BJ (cell line): ENCODE measurements at regions of chr3 and their contacts with region 1.

Region 1: GRCh38 chr3:196202516-196202970 is 8.7 kb downstream of the ZDHHC19 start:
- DNase-seq: no peak
- H3K4me3 ChIP-seq: no peak overlapping the region
- H3K27me3 ChIP-seq: peaks cover 5% of the 10 kb centered on the region
- CTCF ChIP-seq: no peak

Region 2: DNA sequence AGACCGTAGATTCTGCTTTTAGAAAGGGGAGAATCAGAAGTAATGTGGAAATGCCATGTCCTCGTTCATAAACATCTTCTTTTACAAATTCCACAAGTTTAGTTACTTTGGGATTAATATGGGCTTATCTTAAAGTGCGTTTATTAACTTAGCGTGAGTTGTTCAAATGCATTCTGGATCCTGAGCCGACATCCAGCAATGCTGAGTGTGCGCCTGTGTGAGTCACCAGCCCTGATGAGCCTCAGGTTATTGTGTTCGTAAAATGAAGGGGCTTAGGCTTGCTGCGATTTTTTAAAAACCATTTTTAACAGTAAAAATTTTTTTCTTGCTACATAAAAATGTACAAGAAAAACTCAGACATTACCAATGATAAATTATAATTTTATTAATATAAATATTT is 178.6 kb before region 1 on chr3:
- CTCF ChIA-PET with region 1: interaction called, 28 read pairs
- POLR2A ChIA-PET with region 1: no interaction called
- DNase-seq: no peak
- H3K4me3 ChIP-seq: no peak overlapping the region
- H3K27me3 ChIP-seq: 0 out of 2 replicates have a peak, but pooled peaks cover 2% of the 10 kb centered on the region
- CTCF ChIP-seq: no peak

Region 3: GRCh38 chr3:196073188-196073838 is 129.2 kb before region 1 on chr3:
- CTCF ChIA-PET with region 1: interaction called, 56 read pairs
- POLR2A ChIA-PET with region 1: no interaction called
- DNase-seq: no peak
- H3K4me3 ChIP-seq: no peak overlapping the region
- H3K27me3 ChIP-seq: no peaks in the 10 kb centered on the region
- CTCF ChIP-seq: peak; percentile 82

Region 4: GRCh38 chr3:196186651-196187573 is 15.6 kb before region 1 on chr3:
- CTCF ChIA-PET with region 1: interaction called, 30 read pairs
- POLR2A ChIA-PET with region 1: no interaction called
- DNase-seq: no peak
- H3K4me3 ChIP-seq: no peak overlapping the region
- H3K27me3 ChIP-seq: no peaks in the 10 kb centered on the region
- CTCF ChIP-seq: no peak